Dendritic cell treated with granulocyte-macrophage colony-stimulating factor and Interleukin-4, amounts not matched to agents 40 ng/mL and 50 ng/mL, for 4 days (primary cell): ENCODE measurements at regions of chr22 and their contacts with region 1.

Region 1: DNA sequence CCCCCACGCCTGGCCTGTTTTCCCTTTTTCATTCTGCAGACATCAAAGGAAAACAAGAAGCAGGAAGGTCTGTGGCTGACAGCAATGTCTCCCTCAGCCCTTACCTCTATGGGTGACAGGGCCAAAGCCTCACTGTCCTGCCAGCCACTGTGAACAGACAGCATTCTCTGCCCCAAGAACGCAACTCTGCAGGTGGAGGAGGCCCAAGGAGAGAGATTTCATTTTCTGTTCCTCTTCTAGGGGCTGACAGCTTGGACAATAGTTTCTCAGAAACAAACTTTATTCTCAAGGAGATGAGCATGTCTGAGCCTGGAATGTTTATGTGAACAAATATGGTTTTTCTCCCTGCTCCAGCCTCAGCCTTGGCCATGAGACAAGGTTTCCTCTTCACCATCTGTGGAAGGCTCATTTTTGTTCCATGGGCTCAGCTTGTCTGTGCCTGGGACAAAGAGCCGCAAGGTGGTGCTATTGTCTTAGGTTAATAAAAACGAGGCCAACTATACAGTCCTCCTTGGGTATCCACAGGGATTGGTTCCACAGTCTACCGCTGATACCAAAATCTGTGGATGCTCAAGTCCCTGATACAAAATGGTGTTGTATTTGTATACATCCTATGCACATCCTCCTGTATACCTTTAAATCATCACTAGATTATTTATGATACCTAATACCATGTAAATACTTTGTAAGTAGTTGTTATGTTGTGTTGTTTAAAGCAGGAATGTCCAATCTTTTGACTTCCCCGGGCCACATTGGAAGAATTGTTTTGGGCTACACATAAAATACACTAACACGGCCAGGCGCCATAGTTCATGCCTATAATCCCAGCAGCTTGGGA is 5.8 kb downstream of the PIWIL3 start:
- H3K4me3 Mint-ChIP-seq: no peak overlapping the region
- H3K27ac Mint-ChIP-seq: no peak overlapping the region
- H3K4me1 Mint-ChIP-seq: no peaks in the 10 kb centered on the region
- H3K27me3 Mint-ChIP-seq: peaks cover 11% of the 10 kb centered on the region

Region 2: DNA sequence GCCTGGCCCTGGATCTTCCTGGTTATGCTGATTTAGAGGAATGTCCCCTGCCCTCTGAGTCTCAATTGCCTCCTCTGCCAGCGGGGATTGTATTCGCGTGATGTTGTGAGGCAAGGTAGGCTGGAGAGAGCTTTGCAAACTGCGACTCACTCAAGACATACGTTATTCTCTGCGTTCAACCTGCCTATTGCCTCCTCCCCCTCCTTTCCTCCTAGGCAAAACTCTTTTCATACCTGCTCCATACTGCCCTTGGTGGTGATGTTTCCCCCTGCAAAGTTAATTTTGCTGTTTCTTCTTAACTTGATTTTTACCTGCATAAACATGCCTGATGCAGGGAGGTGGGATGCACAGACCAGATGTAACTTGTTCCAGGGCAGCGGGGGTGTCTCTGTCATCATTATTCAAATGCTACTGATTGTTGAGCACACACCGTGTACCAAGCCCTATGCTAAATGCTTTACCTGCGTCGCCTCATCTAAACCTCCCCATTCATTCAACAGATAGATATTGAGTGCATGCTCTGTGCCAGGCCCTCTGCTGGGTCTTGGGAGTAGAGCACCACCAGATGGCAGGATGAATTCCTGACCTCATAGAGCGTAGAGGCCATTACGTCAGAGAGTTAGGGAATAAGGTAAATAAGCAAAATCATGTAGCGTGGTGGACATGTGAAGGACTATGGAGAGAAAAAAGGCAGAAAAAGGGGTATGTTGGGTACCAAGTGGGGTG is 66.3 kb after region 1 on chr22:
- intact Hi-C with region 1: no loop called
- H3K4me3 Mint-ChIP-seq: no peak overlapping the region
- H3K27ac Mint-ChIP-seq: no peak overlapping the region
- H3K4me1 Mint-ChIP-seq: no peaks in the 10 kb centered on the region
- H3K27me3 Mint-ChIP-seq: no peaks in the 10 kb centered on the region

Region 3: GRCh38 chr22:24845041-24845898 is 76.5 kb after region 1 on chr22:
- intact Hi-C with region 1: loop called (anchors 1 kb)
- H3K4me3 Mint-ChIP-seq: no peak overlapping the region
- H3K27ac Mint-ChIP-seq: no peak overlapping the region
- H3K4me1 Mint-ChIP-seq: peaks cover 7% of the 10 kb centered on the region
- H3K27me3 Mint-ChIP-seq: peaks cover 10% of the 10 kb centered on the region

Region 4: GRCh38 chr22:25057013-25057881 is 288.5 kb after region 1 on chr22:
- intact Hi-C with region 1: loop called (anchors 10 kb)
- H3K4me3 Mint-ChIP-seq: no peak overlapping the region
- H3K27ac Mint-ChIP-seq: no peak overlapping the region
- H3K4me1 Mint-ChIP-seq: no peaks in the 10 kb centered on the region
- H3K27me3 Mint-ChIP-seq: peaks cover 12% of the 10 kb centered on the region